ENCODE measurements at regions of chr12 and their contacts with region 1.

Region 1: GRCh38 chr12:56117778-56118687 is at the start of gene ZC3H10:
- DNase-seq: peak; percentile 99
- H3K4me3 Mint-ChIP-seq: peak within 1 kb of the TSS; percentile 95
- H3K27ac Mint-ChIP-seq: peak within 1 kb of the TSS; percentile 100
- H3K4me1 Mint-ChIP-seq: peaks cover 18% of the 10 kb centered on the region
- H3K27me3 Mint-ChIP-seq: no peaks in the 10 kb centered on the region
- CTCF ChIP-seq: peak; percentile 21
- total RNA-seq, gene ZC3H10: 2.8 and 3.5 TPM in 2 replicates

Region 2: DNA sequence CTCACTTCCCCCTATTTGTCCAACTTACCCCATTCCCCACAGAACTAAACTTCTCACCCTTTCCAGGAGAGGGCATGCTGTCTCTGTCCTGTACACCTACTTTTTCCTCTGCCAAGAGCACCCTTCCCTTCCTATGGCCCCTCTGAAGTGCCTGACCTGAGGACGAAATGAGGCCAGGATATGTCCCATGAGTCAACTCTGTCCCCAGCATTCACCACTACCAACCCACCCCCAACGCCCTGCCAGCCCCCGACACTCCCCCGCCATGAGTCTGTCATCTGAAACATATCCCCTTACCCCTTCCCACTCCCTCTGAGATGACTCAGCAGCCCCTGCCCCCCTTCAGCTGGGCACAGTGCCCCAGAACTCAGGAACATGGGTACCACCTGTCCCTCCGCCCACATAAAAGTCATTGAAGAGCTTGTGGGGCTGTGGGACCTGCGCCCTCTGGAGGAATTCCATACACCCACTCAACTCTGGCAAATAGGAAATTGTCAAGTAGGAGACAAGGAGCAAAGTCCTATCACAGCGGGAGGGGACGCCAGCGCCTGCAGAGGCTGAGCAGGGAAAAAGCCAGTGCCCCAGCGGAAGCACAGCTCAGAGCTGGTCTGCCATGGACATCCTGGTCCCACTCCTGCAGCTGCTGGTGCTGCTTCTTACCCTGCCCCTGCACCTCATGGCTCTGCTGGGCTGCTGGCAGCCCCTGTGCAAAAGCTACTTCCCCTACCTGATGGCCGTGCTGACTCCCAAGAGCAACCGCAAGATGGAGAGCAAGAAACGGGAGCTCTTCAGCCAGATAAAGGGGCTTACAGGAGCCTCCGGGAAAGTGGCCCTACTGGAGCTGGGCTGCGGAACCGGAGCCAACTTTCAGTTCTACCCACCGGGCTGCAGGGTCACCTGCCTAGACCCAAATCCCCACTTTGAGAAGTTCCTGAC is 436.6 kb before region 1 on chr12:
- CTCF ChIA-PET with region 1: no interaction called
- POLR2A ChIA-PET with region 1: no interaction called
- intact Hi-C with region 1: no loop called
- DNase-seq: peak; percentile 75
- H3K4me3 Mint-ChIP-seq: no peak overlapping the region
- H3K27ac Mint-ChIP-seq: no peak overlapping the region
- H3K4me1 Mint-ChIP-seq: peaks cover 9% of the 10 kb centered on the region
- H3K27me3 Mint-ChIP-seq: peaks cover 25% of the 10 kb centered on the region
- CTCF ChIP-seq: peak; percentile 37

Region 3: DNA sequence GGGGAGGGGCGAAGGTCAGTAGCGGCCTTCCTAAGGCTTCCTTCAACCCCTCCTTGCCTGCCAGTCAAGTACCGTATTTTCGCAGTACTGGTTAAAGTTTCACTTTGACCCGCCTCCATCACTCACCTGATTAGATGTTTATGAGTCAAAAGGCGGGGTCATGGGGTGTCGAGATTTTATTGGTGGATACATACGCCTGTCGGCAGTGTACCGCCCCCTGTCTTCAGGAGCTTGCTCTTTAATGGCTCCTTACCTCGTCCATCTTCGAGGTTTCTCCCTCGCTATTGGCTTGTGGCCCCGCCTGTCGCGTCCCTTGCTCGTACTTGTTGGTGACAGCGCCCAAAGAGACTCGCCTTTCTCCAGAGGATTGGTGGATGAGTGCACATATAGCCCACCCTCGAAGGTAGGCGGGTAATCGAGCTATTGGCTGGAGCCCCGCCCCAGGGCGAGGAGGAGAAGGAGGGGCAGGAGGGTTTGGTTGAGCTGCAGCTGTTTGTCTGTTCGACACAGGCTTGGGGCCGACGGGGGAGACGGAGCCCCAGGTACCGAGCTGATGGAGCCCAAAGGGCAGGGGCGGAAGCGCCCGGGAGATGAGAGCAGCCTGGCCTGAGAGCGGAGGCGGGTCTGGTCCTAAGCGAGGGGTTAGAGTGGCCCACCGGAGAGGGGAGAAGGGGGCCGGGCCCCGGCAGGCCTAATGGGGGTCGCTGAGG is 144.3 kb before region 1 on chr12 and contains the start of gene RAB5B:
- CTCF ChIA-PET with region 1: interaction called, 3 read pairs
- POLR2A ChIA-PET with region 1: interaction called, 10 read pairs
- intact Hi-C with region 1: no loop called
- DNase-seq: peak; percentile 100
- H3K4me3 Mint-ChIP-seq: no peak within 1 kb of the TSS
- H3K27ac Mint-ChIP-seq: no peak within 1 kb of the TSS
- H3K4me1 Mint-ChIP-seq: peaks cover 25% of the 10 kb centered on the region
- H3K27me3 Mint-ChIP-seq: no peaks in the 10 kb centered on the region
- CTCF ChIP-seq: no peak
- total RNA-seq, gene RAB5B: 67.4 and 96.1 TPM in 2 replicates

Region 4: DNA sequence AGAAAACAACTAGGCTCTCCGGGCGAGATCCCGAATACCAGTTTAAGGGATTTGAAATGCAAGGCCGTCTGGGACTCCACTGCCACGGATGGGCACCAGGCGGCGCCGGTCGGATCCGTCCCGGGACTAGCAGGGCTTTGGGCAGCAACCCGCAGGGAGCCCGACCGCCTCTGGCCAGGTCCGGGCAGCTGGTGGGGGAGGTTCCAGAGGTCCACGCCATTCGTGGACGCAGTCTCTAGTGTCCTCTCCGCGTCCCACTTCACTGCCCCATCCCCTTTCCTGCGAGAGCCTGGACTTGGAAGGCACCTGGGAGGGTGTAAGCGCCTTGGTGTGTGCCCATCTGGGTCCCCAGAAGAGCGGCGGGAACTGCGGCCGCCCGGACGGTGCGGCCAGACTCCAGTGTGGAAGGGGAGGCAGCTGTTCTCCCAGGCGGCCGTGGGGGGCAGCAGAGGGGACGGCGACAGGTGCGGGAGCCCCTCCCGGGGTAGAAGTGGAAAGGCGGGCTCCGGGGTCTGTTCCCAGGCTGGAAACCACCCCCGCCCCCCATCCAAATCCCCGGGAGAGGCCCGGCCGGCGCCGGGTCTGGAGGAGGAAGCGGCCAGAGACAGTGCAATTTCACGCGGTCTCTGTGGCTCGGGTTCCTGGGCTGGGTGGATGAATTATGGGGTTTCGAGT is 38.9 kb before region 1 on chr12:
- CTCF ChIA-PET with region 1: interaction called, 7 read pairs
- POLR2A ChIA-PET with region 1: interaction called, 19 read pairs
- intact Hi-C with region 1: loop called (anchors 1 kb)
- DNase-seq: peak; percentile 85
- H3K4me3 Mint-ChIP-seq: peak overlapping the region; percentile 87
- H3K27ac Mint-ChIP-seq: no peak overlapping the region
- H3K4me1 Mint-ChIP-seq: no peaks in the 10 kb centered on the region
- H3K27me3 Mint-ChIP-seq: no peaks in the 10 kb centered on the region
- CTCF ChIP-seq: peak; percentile 60

Region 5: GRCh38 chr12:56152318-56153033 is 34.4 kb after region 1 on chr12 and contains the start of gene MYL6B:
- CTCF ChIA-PET with region 1: interaction called, 19 read pairs
- POLR2A ChIA-PET with region 1: interaction called, 28 read pairs
- intact Hi-C with region 1: loop called (anchors 5 kb)
- DNase-seq: peak; percentile 93
- H3K4me3 Mint-ChIP-seq: peak within 1 kb of the TSS; percentile 75
- H3K27ac Mint-ChIP-seq: peak within 1 kb of the TSS; percentile 62
- H3K4me1 Mint-ChIP-seq: peaks cover 18% of the 10 kb centered on the region
- H3K27me3 Mint-ChIP-seq: no peaks in the 10 kb centered on the region
- CTCF ChIP-seq: no peak
- total RNA-seq, gene MYL6B: 46.0 and 58.0 TPM in 2 replicates

Region 6: GRCh38 chr12:56224102-56224701 is 106.2 kb after region 1 on chr12 and contains the start of gene NABP2:
- CTCF ChIA-PET with region 1: interaction called, 26 read pairs
- POLR2A ChIA-PET with region 1: interaction called, 68 read pairs
- intact Hi-C with region 1: loop called (anchors 1 kb)
- DNase-seq: peak; percentile 98
- H3K4me3 Mint-ChIP-seq: peak within 1 kb of the TSS; percentile 82
- H3K27ac Mint-ChIP-seq: peak within 1 kb of the TSS; percentile 88
- H3K4me1 Mint-ChIP-seq: peaks cover 24% of the 10 kb centered on the region
- H3K27me3 Mint-ChIP-seq: no peaks in the 10 kb centered on the region
- CTCF ChIP-seq: peak; percentile 78
- total RNA-seq, gene NABP2: 53.3 and 56.2 TPM in 2 replicates

Region 7: DNA sequence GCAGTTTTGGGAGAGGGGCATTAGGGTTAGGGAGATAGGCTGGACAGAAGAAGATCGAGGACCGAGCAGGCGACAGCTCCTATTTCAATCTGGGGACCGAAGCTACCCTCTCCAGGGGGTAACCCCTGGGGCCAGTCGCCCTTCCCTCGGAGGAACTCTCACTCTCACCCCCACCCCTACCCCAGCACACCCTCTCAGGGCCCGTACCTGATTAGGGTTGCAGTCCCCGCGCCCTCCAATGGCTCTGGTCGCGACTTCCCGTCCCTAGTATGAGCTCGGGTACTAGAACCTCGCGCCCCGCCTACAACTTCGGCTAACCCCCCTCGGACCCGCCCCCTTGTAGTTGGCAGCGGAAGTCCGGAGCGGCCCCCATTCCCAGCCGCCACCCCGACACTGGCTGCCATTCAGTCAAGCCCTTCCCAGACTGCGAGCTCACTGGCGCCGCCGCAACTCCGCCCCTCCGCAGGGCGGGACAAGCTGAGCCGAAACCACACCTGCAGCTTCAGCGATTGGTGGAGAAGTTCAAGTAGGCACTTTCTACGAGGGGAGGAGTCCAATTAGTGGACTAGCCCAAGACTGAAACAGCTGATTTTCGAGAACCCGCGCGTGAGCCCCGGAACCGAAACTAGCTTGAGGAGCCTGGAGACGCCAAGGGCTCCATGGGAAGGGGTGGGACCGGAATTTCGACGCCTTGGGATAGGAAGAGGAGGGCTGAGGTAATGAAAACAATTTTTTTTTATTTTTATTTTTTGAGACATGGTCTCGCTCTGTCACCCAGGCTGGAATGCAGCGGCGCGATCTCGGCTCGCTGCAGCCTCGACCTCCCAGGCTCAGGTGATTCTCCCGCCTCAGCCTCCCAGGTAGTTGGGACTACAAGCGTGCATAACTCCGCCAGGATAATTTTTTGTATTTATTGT is 242.1 kb after region 1 on chr12 and contains the start of gene STAT2:
- CTCF ChIA-PET with region 1: no interaction called
- POLR2A ChIA-PET with region 1: interaction called, 19 read pairs
- intact Hi-C with region 1: no loop called
- DNase-seq: peak; percentile 100
- H3K4me3 Mint-ChIP-seq: peak within 1 kb of the TSS; percentile 94
- H3K27ac Mint-ChIP-seq: peak within 1 kb of the TSS; percentile 97
- H3K4me1 Mint-ChIP-seq: peaks cover 8% of the 10 kb centered on the region
- H3K27me3 Mint-ChIP-seq: no peaks in the 10 kb centered on the region
- CTCF ChIP-seq: no peak
- total RNA-seq, gene STAT2: 61.2 and 101 TPM in 2 replicates

Measured in MCF 10A (cell line).